Dorsolateral prefrontal cortex (tissue), 120 donors: ENCODE measurements at regions of chr16 and their contacts with region 1.

Region 1: GRCh38 chr16:2682209-2683021 is at the start of gene KCTD5:
- DNase-seq: peak; percentile 96 to 100 (median 98)
- H3K4me3 ChIP-seq: peak within 1 kb of the TSS; percentile 77 to 100 (median 97)
- H3K27ac ChIP-seq: peak within 1 kb of the TSS in 57 of 59 donors; percentile 11 to 93 (median 84)
- H3K27me3 ChIP-seq: no peaks in the 10 kb centered on the region
- CTCF ChIP-seq: peak in 39 of 56 donors; percentile 5 to 55 (median 36)
- total RNA-seq, gene KCTD5: 11.2 to 26.1 (median 16.7) TPM

Region 2: DNA sequence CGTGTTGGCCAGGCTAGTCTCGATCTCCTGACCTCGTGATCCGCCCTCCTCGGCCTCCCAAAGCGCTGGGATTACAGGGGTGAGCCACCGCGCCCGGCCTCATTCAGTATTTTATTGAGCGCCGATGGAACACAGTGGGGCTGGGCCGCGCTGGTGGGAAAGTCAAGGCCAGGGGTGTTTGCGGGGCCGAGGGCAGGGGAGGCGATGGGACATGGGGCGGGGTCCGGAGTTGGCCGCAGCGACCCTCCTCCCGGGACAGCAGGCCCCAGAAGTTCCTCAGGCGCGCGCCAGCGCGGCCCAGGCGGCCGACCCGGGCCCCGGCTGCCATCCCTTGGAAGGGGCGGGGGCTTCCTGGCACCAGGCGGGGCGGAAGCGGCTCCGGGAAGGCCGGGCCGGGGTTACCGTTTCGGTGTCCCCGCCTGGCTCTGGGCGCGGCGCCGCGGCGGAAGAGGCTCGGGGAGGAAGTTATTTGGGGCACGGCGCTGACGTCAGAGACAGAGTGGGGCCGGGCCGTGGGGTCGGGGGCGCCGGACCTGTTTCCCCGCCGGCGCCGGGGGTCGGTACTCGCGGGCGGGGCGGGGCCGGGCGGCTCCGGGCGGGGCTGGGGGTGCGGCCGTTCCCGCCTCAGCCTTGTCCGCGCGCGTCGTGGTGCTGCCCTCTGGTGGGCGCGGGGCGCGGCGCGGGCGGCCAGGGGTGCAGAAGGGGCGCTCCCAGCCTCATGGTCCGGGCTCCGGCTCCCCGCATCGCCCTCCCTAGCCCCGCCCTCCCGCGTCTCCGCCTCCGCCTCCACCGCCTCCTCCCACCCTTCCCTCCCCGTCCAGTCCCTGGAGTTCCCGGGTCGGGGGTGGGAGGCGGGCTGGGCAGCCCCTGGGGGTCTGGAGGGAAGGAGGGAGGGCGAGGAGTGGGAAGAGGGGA is 38.6 kb after region 1 on chr16:
- intact Hi-C with region 1: loop called in 1 of 2 experiments (anchors 2 kb)
- DNase-seq: peak in 9 of 10 donors; percentile 31 to 82 (median 53)
- H3K4me3 ChIP-seq: peak overlapping the region; percentile 55 to 83 (median 73)
- H3K27ac ChIP-seq: peak overlapping the region in 34 of 59 donors; percentile 4 to 79 (median 51)
- H3K27me3 ChIP-seq: no peaks in the 10 kb centered on the region
- CTCF ChIP-seq: peak in 55 of 56 donors; percentile 32 to 96 (median 72)

Region 3: DNA sequence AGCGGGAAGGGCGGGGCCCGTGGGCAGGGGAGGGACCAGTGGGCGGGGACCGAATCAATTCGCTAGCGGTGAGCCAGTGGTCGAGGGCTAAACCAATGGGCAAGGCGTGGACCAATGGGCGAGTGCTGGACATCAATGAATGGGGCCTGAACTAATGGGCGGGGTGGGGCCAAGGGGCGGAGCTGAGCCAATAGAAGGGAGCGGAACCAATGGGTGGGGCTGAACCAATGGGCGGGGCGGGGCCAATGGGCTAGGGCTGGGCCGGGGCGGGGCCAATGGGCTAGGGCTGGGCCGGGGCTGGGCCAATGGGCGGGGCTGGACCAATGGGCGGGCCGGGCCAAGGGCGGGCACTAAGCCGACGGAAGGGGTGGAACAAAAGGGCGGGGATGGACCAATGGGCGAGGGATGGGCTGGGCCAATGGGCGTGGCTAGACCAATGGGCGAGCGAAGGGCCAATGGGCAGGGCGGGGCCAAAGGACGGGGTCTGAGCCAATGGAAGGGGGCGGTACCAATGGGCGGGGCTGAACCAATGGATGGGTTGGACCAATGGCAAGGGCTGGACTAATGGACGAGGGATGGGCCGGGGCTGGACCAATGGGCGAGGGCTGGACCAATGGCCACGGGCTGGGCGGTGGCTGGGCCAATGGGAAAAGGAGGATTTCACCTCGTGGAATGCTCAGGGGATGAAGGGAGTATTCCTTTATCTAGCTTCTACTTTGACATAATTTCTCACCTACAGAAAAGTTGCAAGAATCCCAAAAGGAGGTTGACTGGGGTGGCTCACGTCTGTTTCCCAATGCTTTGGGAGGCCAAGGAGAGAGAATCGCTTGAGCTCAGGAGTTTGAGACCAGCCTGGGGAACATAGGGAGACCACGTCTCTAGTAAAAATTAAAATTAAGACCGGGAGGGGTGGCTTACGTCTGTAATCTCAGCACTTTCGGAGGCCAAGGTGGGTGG is 223.3 kb after region 1 on chr16:
- intact Hi-C with region 1: no loop called
- DNase-seq: peak; percentile 98 to 100 (median 100)
- H3K4me3 ChIP-seq: peak overlapping the region; percentile 53 to 95 (median 83)
- H3K27ac ChIP-seq: peak overlapping the region in 47 of 59 donors; percentile 17 to 99 (median 95)
- H3K27me3 ChIP-seq: no peaks in the 10 kb centered on the region
- CTCF ChIP-seq: peak in 9 of 56 donors; percentile 7 to 36 (median 32)

Region 4: DNA sequence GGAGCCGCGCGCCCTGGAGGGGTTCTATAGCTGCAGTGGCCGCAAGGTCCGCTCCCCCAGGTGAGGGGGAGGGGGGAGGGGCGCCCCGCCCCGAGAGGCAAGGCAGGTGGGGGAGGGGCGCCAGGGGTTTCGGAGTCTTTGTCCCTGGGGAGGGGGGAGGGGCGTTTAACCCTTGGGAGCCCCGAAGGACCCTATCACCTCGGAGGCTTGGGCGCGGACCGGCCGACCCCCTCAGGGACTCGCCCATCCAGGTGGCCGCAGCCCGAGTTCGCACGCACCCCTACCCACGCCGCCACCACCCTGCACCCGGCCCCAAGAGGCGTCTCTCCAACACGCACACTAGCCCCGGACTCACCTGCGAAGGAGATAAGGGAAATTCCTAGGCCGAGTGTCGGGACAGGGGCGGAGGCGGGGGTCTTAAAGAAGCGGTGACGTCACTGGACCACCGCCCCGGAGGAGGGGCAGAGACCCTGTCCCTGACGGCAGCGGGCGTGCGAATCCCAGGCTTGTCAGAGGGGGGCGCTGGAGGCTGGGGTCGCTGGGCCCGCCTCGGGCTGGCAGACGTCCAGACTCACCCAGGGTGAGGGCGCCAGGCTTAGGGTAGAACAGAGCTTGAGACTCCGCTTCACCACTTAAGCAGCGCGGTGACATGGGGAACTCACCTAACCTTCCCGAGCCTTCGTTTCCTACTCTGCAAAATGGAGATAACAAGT is 335.5 kb after region 1 on chr16 and contains the start of gene CLDN6:
- intact Hi-C with region 1: no loop called
- DNase-seq: no peak
- H3K4me3 ChIP-seq: peak within 1 kb of the TSS in 1 of 59 donors; percentile 2
- H3K27ac ChIP-seq: no peak within 1 kb of the TSS
- H3K27me3 ChIP-seq: peaks cover 0 to 32% (median 18%) of the 10 kb centered on the region in 45 donors
- CTCF ChIP-seq: no peak
- total RNA-seq, gene CLDN6: 0.28 to 1.5 (median 0.47) TPM in 27 of 120 experiments, not detected in the others